Activated CD8-positive, alpha-beta T cell treated with anti-CD3 and anti-CD28 coated beads, Interleukin-2, amount 10 ng/mL, durations not matched to agents 7 days and 5 days (primary cell): ENCODE measurements at regions of chr16 and their contacts with region 1.

Region 1: GRCh38 chr16:66830422-66831404 is at the start of gene NAE1:
- DNase-seq: peak; percentile 90
- ATAC-seq: peak; percentile 97
- H3K4me3 Mint-ChIP-seq: peak within 1 kb of the TSS; percentile 74
- H3K27ac Mint-ChIP-seq: peak within 1 kb of the TSS; percentile 83
- H3K4me1 Mint-ChIP-seq: peaks cover 28% of the 10 kb centered on the region
- H3K27me3 Mint-ChIP-seq: peaks cover 7% of the 10 kb centered on the region
- total RNA-seq, gene NAE1: 77.3 to 84.1 TPM

Region 2: GRCh38 chr16:66562407-66562806 is 268.3 kb before region 1 on chr16:
- CTCF ChIA-PET with region 1: interaction called, 13 read pairs
- POLR2A ChIA-PET with region 1: no interaction called
- DNase-seq: no peak
- ATAC-seq: no peak
- H3K4me3 Mint-ChIP-seq: no peak overlapping the region
- H3K27ac Mint-ChIP-seq: no peak overlapping the region
- H3K4me1 Mint-ChIP-seq: peaks cover 65% of the 10 kb centered on the region
- H3K27me3 Mint-ChIP-seq: no peaks in the 10 kb centered on the region

Region 3: GRCh38 chr16:66740010-66740409 is 90.7 kb before region 1 on chr16:
- CTCF ChIA-PET with region 1: interaction called, 15 read pairs
- POLR2A ChIA-PET with region 1: no interaction called
- DNase-seq: peak; percentile 56
- ATAC-seq: peak; percentile 73
- H3K4me3 Mint-ChIP-seq: no peak overlapping the region
- H3K27ac Mint-ChIP-seq: peak overlapping the region; percentile 9
- H3K4me1 Mint-ChIP-seq: peaks cover 27% of the 10 kb centered on the region
- H3K27me3 Mint-ChIP-seq: no peaks in the 10 kb centered on the region

Region 4: GRCh38 chr16:66774981-66775380 is 55.7 kb before region 1 on chr16:
- CTCF ChIA-PET with region 1: interaction called, 11 read pairs
- POLR2A ChIA-PET with region 1: no interaction called
- DNase-seq: no peak
- ATAC-seq: no peak
- H3K4me3 Mint-ChIP-seq: no peak overlapping the region
- H3K27ac Mint-ChIP-seq: no peak overlapping the region
- H3K4me1 Mint-ChIP-seq: no peaks in the 10 kb centered on the region
- H3K27me3 Mint-ChIP-seq: no peaks in the 10 kb centered on the region

Region 5: DNA sequence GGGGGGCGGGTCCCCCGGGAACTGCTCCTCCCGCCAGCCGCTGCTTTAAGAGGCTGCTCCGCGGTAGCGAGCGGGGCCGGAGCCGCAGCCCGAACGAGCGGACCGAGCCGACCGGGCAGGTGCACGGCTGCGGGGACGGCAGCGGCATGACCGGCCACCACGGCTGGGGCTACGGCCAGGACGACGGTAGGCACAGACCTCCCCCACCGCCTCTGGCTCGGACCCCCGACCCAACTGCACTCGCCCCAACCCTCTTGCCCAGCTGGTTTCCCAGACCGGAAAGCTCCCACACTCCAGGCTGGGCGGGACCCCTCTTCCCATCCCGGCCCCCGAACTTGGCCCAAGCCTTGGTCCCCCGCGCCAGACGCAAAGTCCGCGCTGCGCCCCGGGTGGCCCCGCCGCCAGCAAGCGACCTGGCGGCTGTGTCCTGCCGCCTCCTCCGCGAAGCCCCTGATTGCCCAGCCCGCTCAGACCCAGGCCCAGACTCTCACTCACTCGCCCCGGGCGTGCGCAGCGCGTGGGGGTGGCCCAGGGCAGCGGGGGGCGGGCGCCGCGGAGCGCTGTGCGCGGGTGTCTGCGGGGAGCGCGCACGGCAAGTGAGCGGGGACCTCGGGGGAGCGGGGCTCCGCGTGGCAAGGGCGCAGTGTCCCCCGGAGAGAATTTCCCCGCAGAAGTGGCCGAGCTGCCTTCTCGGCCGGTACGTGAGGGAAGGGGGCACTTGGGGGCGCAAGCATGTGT is 13.8 kb after region 1 on chr16 and contains the start of gene CA7:
- CTCF ChIA-PET with region 1: interaction called, 107 read pairs
- POLR2A ChIA-PET with region 1: interaction called, 3 read pairs
- DNase-seq: no peak
- ATAC-seq: peak; percentile 30
- H3K4me3 Mint-ChIP-seq: peak within 1 kb of the TSS; percentile 18
- H3K27ac Mint-ChIP-seq: no peak within 1 kb of the TSS
- H3K4me1 Mint-ChIP-seq: peaks cover 25% of the 10 kb centered on the region
- H3K27me3 Mint-ChIP-seq: peaks cover 48% of the 10 kb centered on the region
- total RNA-seq, gene CA7: not detected

Region 6: DNA sequence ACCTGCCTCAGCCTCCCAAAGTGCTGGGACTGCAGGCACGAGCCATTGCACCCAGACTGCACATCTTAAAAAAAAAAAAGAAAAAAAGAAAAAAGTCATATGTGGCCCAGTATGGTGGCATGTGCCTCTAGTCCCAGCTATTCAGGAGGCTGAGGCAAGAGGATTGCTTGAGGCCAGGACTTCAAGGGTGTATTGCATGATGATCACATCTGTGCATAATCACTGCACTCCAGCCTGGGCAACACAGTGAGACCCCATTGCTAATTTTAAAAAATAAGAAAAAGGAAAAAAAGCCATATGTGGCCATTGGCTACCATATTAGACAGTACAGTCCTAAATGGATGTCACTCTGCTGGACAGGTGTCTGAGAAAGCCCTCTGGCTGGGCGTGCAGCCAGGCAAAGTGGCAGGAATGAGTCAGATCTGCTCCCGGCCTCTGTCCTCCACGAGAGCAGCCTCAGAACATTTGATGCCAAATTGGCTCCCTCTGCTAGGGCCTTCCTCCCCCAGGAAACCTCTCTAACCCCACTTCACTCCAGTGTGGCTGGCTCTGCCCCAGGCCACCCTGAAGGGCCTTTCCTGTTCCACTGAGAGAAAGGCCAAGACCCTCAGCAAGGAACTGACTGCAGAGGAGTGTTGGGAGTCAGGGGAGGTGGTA is 28.2 kb after region 1 on chr16:
- CTCF ChIA-PET with region 1: interaction called, 14 read pairs
- POLR2A ChIA-PET with region 1: no interaction called
- DNase-seq: no peak
- ATAC-seq: no peak
- H3K4me3 Mint-ChIP-seq: no peak overlapping the region
- H3K27ac Mint-ChIP-seq: no peak overlapping the region
- H3K4me1 Mint-ChIP-seq: no peaks in the 10 kb centered on the region
- H3K27me3 Mint-ChIP-seq: no peaks in the 10 kb centered on the region

Region 7: GRCh38 chr16:66880288-66881013 is 49.7 kb after region 1 on chr16 and contains the start of gene PDP2:
- CTCF ChIA-PET with region 1: interaction called, 66 read pairs
- POLR2A ChIA-PET with region 1: no interaction called
- DNase-seq: peak; percentile 95
- ATAC-seq: peak; percentile 98
- H3K4me3 Mint-ChIP-seq: peak within 1 kb of the TSS; percentile 100
- H3K27ac Mint-ChIP-seq: peak within 1 kb of the TSS; percentile 98
- H3K4me1 Mint-ChIP-seq: peaks cover 65% of the 10 kb centered on the region
- H3K27me3 Mint-ChIP-seq: no peaks in the 10 kb centered on the region
- total RNA-seq, gene PDP2: 24.2 to 26.9 TPM